AG04449 (cell line): ENCODE measurements at regions of chr12 and their contacts with region 1.

Region 1: DNA sequence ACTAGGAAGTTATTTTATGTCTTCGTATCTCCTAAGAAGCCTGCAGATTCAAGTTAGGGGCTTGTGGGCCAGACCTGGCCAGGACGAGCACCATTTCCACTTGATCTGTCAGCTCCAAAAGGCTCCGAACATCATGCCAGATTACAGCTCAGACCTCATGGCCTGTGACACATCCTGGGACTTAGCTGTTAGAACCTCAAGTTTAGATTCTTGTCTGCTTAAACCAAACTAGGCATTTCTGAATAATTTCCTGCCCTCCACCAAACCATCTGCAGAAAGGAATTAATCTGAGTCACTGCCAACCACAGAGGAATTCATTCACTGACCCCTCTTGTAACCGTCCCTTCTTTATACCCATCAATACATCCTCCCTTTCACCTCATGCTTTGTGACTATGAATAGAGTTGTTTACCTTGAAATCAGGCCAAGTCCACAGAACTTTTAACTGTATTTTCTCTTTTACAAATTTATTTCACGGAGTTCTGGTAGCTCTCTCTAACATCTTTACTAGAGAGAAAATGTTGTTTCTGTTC is 120.3 kb downstream of the FBXL14 start:
- DNase-seq: peak; percentile 93
- H3K4me3 ChIP-seq: peak overlapping the region; percentile 36
- CTCF ChIP-seq: no peak

Region 2: DNA sequence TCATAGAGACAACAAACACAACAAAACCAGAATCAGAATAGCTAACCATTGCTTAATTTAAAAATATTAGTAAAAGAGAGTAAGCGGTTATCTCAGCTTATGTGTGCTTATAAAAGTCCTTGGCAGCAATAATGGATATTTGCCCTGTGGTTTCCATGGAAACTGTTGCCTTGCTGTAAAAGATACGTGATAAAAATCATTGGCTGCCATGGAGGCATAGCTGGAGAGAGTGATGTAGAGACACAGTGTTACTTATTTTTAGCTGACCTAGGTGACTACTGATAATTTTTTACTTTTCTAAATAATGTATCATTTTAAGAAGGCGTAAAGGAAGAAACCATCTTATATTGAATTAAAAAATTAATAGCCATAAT is 390.2 kb before region 1 on chr12:
- CTCF ChIA-PET with region 1: no interaction called
- POLR2A ChIA-PET with region 1: no interaction called
- DNase-seq: no peak
- H3K4me3 ChIP-seq: no peak overlapping the region
- CTCF ChIP-seq: no peak

Region 3: DNA sequence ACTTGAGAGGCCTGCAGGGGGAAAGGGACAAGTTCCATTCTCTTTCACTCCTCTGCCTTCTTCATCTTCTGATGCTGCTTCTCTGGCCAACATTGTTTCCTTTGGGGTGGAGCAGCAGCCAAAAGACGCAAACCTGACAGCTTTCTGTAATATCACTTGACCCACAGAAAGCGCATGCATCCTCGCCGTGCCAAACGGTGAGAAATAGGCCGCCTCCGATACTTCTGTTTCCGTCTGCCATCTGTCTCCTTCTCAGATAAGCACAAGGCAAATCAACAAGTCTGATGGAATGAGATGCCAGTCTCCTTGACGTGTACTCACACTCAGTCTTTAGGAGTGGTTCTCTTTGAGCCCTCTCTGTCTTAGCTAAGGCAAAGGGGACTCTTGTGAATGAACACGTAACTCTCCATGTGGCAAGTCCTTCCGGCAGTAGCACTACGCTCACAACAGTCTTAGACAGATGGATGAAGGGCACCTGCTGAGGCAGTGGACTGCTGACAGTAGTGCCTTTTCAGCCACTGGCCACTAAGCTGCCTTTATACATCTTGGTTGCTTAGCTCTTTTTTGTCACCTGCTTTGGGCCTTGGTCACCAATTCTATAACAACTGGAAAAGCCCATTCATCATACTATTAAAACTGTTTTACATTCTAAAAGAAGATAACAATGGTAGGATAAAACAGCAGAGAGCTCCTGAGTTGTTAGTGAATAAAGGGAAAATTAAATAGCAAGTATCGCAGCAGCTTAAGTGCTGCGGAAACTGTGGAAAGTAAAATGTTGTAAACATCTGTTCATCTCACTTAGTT is 93.7 kb before region 1 on chr12:
- CTCF ChIA-PET with region 1: no interaction called
- POLR2A ChIA-PET with region 1: no interaction called
- DNase-seq: no peak
- H3K4me3 ChIP-seq: no peak overlapping the region
- CTCF ChIP-seq: no peak

Region 4: DNA sequence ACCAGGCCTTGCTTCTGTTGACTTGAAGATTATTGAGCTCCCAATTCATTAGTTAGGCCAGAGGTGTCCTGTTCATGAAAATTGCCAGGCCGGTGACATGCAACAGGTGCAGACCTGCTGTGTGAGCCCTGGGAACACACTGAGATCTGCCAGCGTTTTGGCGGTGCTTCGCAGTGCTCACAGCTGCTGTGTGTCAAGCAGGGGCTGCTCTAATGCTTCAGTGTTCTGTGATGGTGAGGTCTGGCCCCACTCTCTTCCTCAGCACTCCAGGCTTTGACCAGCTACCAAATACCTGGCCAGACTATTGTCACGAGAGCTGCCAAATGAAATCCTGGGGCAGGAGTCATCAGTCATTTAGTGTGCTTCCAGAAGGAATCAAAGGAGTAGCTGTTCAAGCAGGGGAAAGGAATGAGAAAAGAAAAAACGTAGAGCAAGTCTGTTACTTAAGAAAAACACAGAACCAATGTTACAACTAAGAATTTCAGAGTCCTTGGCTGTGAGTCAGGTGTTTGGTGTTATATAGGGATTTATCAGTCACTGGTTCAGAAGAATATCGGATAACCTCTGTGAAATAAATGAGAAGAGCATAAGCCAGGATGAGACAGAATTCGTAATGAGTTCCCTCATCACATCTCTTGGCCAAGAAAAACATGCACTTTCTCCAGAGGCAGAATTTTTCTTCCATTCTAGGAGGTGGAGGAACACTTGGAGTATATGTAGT is 30.5 kb before region 1 on chr12:
- CTCF ChIA-PET with region 1: interaction called, 3 read pairs
- POLR2A ChIA-PET with region 1: interaction called, 16 read pairs
- DNase-seq: peak; percentile 78
- H3K4me3 ChIP-seq: peak overlapping the region; percentile 38
- CTCF ChIP-seq: no peak

Region 5: DNA sequence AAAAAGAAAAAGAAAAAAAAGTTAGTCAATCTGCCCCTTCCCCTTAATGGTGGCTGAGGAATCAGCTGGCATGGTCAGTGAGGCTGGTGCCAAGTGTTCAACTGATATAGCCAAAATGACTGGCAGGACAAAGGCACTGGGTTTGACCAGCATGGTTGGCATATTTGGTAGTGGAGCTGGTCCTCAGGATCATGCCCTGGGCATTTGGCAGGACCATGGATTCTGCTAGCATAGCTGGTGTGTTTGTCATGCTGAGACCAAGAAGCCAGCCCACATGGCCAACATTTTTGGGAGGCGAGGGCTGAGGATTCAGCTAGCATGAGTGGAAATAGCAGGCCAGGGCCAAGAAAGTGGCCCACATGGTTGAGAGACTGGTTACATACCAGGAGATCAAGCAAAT is 16.2 kb before region 1 on chr12:
- CTCF ChIA-PET with region 1: interaction called, 3 read pairs
- POLR2A ChIA-PET with region 1: interaction called, 25 read pairs
- DNase-seq: peak; percentile 80
- H3K4me3 ChIP-seq: no peak overlapping the region
- CTCF ChIP-seq: no peak

Region 6: GRCh38 chr12:1502379-1502720 is 28.2 kb after region 1 on chr12:
- CTCF ChIA-PET with region 1: no interaction called
- POLR2A ChIA-PET with region 1: no interaction called
- DNase-seq: no peak
- H3K4me3 ChIP-seq: no peak overlapping the region
- CTCF ChIP-seq: no peak

Region 7: GRCh38 chr12:1583421-1584078 is 109.4 kb after region 1 on chr12:
- CTCF ChIA-PET with region 1: interaction called, 11 read pairs
- POLR2A ChIA-PET with region 1: interaction called, 6 read pairs
- DNase-seq: no peak
- H3K4me3 ChIP-seq: peak overlapping the region; percentile 24
- CTCF ChIP-seq: peak; percentile 84